AG04450 (cell line): ENCODE measurements at regions of chr22 and their contacts with region 1.

Region 1: GRCh38 chr22:30882974-30883573 is 85.5 kb downstream of the MORC2 start:
- DNase-seq: no peak
- H3K4me3 ChIP-seq: no peak overlapping the region
- H3K27ac ChIP-seq: no peak overlapping the region
- H3K27me3 ChIP-seq: peaks cover 10% of the 10 kb centered on the region
- CTCF ChIP-seq: no peak

Region 2: DNA sequence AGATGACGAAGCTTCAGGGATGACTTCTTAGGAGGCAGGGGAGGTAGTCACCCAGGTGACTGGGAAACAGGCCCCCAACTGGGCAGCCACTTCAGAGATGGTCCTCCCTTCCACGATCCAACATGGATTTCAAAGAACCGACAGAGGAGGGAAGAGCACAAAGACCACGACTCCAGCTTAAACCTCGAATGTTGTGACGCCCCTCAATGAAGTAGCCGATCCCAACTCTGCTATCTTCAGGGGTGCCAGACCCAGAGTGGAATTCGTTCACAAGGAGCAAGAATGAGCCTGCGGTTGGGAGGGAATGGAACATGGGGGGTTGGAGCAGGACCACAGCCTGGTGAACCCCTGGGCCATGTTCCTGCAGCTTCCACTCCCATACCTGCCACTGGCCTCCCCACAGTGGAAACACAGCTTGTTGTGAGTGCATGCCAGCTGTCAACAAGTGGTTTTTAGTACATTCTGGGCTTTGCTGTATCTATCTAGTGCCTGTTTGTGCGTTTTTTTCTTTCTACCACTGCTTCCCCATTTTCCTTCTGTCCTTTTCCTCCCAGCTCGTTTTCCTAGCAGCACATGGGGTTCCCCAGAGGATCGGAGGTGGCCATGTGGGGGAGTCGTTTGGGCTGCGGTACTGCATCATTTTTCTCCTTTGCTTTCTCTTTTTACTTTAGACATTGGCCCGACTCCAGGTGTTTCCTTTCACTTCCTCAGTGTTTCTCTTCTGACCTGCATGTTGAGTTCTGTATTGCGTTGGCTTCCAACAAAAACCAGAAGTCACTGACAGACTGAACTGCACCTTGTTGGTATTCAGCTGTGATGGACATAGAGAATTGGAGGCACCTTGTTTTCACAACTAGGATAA is 19.7 kb after region 1 on chr22:
- CTCF ChIA-PET with region 1: no interaction called
- POLR2A ChIA-PET with region 1: no interaction called
- DNase-seq: no peak
- H3K4me3 ChIP-seq: no peak overlapping the region
- H3K27ac ChIP-seq: no peak overlapping the region
- H3K27me3 ChIP-seq: no peaks in the 10 kb centered on the region
- CTCF ChIP-seq: no peak

Region 3: DNA sequence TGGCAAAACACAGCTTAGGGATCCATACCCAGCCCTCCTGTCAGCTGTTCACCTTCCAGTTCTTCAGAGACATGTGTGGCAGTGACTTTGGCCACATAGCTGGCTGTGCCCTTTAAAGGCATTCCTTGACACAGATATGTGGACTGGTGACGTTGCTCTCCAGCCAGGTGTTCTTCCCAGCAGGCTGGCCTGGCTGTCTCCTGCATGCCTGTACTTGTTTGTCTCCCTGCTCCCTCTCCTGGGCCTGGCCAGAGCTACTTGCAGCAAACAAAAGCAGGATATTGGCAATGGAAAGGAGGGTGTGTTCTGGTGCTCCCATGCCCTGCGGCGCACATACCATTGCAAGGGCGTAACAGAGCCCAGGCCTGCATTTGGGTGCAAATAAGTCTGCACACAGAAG is 370.9 kb after region 1 on chr22:
- CTCF ChIA-PET with region 1: interaction called, 13 read pairs
- POLR2A ChIA-PET with region 1: no interaction called
- DNase-seq: no peak
- H3K4me3 ChIP-seq: no peak overlapping the region
- H3K27ac ChIP-seq: no peak overlapping the region
- H3K27me3 ChIP-seq: no peaks in the 10 kb centered on the region
- CTCF ChIP-seq: no peak

Region 4: DNA sequence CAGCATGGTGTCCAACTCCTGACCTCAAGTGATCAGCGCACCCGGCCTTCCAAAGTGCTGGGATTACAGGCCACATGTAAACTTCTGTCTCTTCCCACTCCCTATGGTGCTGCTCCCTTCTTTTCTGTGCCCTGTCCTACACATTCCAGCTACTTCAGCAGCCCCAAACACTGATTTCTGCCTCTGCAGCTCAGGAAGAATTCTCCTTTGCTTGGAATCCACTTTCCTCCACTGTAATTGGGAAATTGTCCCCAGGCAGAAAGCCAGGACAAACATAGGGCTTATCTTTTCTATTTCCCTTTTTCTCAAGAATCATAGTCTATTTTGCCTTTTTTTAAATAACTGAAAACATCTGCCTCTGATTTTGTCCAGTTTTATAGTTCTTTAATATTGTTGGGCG is 495.0 kb after region 1 on chr22:
- CTCF ChIA-PET with region 1: no interaction called
- POLR2A ChIA-PET with region 1: no interaction called
- DNase-seq: no peak
- H3K4me3 ChIP-seq: no peak overlapping the region
- H3K27ac ChIP-seq: no peak overlapping the region
- H3K27me3 ChIP-seq: peaks cover 3% of the 10 kb centered on the region
- CTCF ChIP-seq: no peak